ENCODE measurements at regions of chr17 and their contacts with region 1.

Region 1: DNA sequence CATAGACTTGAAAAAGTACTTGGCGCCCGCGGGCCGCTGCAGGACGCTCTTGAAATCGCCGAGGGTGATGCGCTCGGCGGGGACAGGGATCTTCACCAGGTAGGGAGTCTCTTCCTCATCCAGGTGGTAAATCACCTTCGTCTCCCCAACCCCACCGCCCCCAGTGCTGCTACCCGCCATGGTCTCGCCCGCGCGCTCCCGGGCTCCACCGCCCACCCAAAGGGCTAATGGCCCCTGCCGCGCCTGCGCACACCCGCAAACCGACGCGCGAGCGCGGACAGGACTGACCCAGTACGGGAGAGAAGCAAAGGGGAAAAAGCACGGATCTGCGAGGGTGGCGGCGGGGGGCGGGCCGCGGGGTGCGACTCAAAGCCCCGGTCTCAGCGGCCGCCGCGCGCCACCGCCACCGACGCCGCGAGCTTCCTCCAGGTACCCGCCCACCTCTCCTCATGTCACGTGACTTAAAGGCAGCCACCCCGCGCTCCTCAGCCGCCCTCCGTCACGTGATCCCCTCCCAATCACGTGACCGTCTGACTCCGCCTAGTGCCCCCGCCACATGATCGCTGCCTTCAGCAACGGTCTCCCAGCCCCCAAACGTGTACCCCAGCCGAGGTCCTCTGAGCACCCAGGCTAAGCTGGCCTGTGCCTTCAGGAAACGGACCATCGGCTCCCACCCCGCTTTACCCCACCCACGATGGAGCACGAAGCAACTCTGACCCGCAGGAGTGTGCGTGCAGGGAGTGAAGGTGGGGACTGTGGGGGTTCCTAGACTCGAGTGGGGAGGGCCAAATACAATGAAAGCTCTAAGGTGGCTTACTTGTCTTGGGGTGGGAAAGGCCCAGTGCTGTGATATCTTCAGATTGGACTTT is at the start of gene DVL2:
- H3K4me3 Mint-ChIP-seq: peak within 1 kb of the TSS; percentile 94
- H3K27ac Mint-ChIP-seq: peak within 1 kb of the TSS; percentile 98
- H3K4me1 Mint-ChIP-seq: peaks cover 70% of the 10 kb centered on the region
- H3K27me3 Mint-ChIP-seq: no peaks in the 10 kb centered on the region

Region 2: DNA sequence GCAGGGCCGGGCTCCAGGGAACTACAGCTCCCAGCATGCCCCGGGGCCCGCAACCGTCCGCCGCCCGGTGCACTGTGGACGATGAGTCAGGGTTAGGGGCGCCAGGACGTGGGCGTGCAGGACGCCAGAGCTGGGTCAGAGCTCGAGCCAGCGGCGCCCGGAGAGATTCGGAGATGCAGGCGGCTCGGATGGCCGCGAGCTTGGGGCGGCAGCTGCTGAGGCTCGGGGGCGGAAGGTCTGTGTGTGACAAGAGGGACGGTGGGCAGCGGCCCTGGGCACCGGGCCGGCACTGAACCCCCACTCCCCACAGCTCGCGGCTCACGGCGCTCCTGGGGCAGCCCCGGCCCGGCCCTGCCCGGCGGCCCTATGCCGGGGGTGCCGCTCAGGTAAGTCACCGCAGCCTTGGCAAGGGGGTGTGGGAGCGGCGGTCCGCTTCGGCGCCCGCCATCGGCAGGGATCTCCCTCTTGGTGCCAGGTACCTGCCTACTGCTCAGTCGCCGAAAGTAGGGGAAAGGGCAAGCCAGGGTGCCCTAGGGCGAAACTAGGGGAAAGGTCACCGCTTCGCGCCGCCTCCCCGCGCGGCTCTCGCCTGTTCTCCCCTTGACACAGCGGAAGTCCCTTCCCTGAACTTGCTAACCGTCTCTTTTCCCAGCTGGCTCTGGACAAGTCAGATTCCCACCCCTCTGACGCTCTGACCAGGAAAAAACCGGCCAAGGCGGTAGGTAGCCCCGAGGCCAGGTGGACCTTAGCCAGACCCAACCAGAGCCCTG is 14.3 kb before region 1 on chr17 and contains the starts of genes ACADVL and DLG4:
- intact Hi-C with region 1: loop called (anchors 2 kb)
- H3K4me3 Mint-ChIP-seq: peak within 1 kb of the TSS; percentile 99
- H3K27ac Mint-ChIP-seq: peak within 1 kb of the TSS; percentile 91
- H3K4me1 Mint-ChIP-seq: peaks cover 67% of the 10 kb centered on the region
- H3K27me3 Mint-ChIP-seq: no peaks in the 10 kb centered on the region

Region 3: DNA sequence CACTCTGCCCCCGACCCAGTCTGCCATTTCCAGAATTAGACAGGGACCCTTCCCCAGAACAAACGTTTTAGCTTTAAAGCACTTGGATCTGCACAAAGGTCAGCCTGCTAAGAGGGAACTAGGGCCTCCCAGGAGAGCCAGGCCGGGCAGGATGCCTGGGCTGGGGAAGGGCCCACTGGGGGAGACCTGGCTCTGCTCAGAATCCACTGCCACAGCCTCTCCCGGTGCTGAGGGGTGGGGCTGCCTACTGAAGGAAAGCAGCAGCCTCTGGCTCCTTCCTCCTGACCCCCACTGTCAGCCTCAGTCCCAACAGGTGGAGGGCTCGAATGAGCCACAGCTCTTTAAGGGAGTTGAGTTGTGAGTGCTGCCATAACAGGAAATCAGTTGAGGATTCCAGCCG is 58.4 kb after region 1 on chr17:
- intact Hi-C with region 1: no loop called
- H3K4me3 Mint-ChIP-seq: no peak overlapping the region
- H3K27ac Mint-ChIP-seq: no peak overlapping the region
- H3K4me1 Mint-ChIP-seq: peaks cover 30% of the 10 kb centered on the region
- H3K27me3 Mint-ChIP-seq: peaks cover 87% of the 10 kb centered on the region

Measured in dendritic cell treated with granulocyte-macrophage colony-stimulating factor and Interleukin-4, amounts not matched to agents 40 ng/mL and 50 ng/mL, for 4 days (primary cell).